Activated naive CD4-positive, alpha-beta T cell treated with anti-CD3 and anti-CD28 coated beads for 36 hours (primary cell): ENCODE measurements at regions of chr3 and their contacts with region 1.

Region 1: DNA sequence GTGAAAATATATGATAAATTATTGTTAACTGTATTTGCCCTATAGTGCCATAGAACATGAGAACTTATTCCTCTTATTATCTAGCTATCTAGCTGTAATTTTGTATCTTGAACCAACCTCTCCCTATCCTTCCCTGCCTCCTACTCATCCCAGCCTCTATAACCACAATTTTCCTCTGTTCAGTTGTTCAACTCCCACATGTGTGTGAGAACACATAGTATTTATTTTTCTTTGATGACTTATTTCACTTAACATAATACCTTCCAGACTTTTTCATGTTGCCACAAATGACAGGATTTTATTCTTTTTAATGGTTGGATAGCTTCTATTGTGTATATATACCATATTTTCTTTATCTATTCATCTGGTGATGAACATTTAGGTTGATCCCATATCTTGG is 85.4 kb upstream of the SUCLG2 start:
- DNase-seq: no peak
- H3K4me3 Mint-ChIP-seq: no peak overlapping the region
- H3K27ac Mint-ChIP-seq: peak overlapping the region; percentile 9
- H3K4me1 Mint-ChIP-seq: peaks cover 66% of the 10 kb centered on the region
- H3K27me3 Mint-ChIP-seq: no peaks in the 10 kb centered on the region

Region 2: GRCh38 chr3:67685499-67685898 is 54.4 kb before region 1 on chr3:
- CTCF ChIA-PET with region 1: no interaction called
- intact Hi-C with region 1: loop called (anchors 2 kb)
- DNase-seq: peak; percentile 12
- H3K4me3 Mint-ChIP-seq: peak overlapping the region; percentile 17
- H3K27ac Mint-ChIP-seq: peak overlapping the region; percentile 54
- H3K4me1 Mint-ChIP-seq: peaks cover 32% of the 10 kb centered on the region
- H3K27me3 Mint-ChIP-seq: no peaks in the 10 kb centered on the region